Right lobe of liver (tissue), 6 donors: ENCODE measurements at regions of chr17 and their contacts with region 1.

Region 1: DNA sequence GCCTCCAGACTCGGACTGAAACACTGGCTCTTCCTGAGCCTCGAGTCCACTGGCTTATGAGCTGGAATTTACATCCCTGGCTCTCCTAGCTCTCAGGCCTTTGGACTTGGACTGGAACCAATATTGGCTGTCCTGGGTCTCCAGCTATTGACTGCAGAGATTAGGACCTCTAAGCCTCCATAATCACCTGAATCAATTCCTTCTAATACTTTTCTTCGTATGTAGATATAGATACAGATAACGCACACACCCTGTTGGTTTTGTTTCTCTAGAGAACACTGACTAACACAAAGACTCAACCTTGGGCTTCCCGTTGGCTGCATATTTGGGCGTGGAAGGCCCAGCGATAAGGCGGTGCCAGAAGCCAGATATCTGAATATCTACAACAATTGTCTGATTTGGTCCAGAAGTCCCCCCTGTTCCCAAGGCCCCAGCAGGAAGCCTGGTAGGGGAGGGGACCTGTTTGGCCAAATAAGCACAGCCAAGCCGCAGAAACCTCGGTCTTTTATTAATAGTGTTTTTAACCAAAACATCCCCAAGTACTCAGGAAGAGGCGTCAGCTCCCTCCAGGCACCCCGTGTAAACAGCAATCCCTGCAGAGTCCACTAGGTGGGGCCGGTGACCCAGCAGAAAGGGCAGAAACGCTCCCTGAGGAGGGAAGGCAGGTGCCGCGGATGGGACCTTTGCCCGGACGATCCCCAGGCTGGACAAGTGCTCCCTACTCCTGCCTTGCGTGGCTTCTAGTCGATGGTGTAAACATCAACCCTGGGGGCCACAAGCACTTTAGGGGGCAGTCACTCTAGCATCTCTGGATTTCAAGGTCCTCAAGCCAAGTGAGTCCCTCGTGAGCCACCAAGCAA is 57.0 kb downstream of the ABR start:
- DNase-seq: peak; percentile 80 to 87 (median 82)
- ATAC-seq: peak; percentile 86 to 93 (median 90)
- H3K4me3 ChIP-seq: no peak overlapping the region
- H3K27ac ChIP-seq: no peak overlapping the region
- H3K4me1 ChIP-seq: peaks cover 0 to 12% (median 3%) of the 10 kb centered on the region in 4 donors
- H3K27me3 ChIP-seq: no peaks in the 10 kb centered on the region
- CTCF ChIP-seq: peak; percentile 84 to 91 (median 88)
- POLR2A ChIP-seq: no peak

Region 2: DNA sequence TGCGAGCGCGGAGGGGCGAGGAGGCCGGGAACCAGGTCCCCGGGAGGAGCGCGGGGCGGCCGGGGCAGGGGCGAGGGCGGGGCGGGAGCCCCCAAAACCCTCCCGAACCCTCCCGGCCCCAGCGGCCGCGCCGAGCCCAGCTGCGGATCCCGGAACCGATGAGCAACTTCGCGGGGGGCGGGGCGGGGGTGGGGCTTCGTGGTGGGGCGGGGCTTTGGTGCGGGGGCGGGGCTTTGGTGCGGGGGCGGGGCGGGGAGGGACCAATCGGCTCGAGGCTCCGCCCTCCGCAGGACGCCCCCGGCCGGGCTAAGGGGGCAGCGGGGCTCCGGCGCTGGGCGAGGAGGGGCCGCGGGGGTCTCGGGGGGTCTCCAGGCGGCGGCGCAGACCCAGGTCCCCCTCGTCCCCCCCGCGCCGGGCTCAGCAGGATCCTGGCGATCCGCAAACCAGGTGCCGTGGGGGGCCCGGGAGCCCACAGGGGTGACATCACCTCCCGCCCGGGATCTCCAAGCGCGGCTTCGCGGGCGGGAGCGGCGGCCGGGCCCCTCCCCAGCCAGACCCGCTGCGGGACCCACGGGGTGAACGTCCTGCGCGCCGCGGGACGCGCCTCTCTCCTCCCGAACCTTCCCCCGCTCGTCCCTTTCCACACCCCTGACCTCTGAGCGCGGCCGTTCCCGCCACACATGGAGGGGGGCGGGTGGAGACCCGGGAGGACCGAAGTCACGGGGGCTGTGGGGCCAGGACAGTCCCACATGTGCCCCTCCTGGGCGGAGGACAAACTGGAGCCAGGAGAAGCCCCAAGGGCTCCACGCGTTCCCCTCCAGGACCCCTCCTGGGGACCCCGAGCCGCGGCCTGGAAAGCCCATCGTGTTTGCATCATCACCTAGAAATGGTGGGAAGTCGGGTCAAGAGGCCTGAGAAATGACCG is 57.3 kb after region 1 on chr17 and contains the start of gene ABR:
- intact Hi-C with region 1: loop called (anchors 5 to 10 kb)
- DNase-seq: peak in 2 of 3 donors; percentile 61 to 65
- ATAC-seq: peak; percentile 36 to 67 (median 49)
- H3K4me3 ChIP-seq: peak within 1 kb of the TSS; percentile 39 to 54 (median 43)
- H3K27ac ChIP-seq: no peak within 1 kb of the TSS
- H3K4me1 ChIP-seq: no peaks in the 10 kb centered on the region
- H3K27me3 ChIP-seq: peaks cover 0 to 3% of the 10 kb centered on the region in 2 donors
- CTCF ChIP-seq: no peak
- POLR2A ChIP-seq: no peak
- total RNA-seq, gene ABR: 7.4 to 21.5 (median 11.3) TPM